ENCODE measurements at regions of chr2 and their contacts with region 1.

Region 1: DNA sequence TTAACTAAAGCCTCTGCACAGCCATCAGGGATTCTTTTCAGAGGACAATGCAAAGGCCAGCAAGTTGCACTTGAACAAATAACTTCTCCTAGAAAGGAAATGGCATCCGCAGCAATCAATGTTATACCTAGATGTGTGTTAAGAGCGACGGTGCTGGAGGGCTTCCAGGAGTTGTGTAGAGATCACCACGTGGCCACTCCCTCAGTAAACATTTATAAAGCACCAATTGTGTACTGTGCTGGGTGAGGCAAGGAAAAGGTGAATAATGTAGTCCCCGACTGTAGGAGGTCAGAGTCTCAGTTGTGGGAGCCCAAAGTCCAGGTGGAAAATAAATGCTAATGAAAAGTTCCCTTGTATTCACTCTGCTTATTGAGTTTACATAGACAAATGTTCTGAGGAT is 135.0 kb downstream of the ALK start:
- DNase-seq: peak; percentile 78
- ATAC-seq: peak; percentile 66
- H3K4me3 ChIP-seq: no peak overlapping the region
- H3K27ac ChIP-seq: peak overlapping the region; percentile 19; the same call in 1 of the 2 replicates
- H3K4me1 ChIP-seq: peaks cover 19% of the 10 kb centered on the region
- H3K27me3 ChIP-seq: no peaks in the 10 kb centered on the region
- CTCF ChIP-seq: no peak

Region 2: DNA sequence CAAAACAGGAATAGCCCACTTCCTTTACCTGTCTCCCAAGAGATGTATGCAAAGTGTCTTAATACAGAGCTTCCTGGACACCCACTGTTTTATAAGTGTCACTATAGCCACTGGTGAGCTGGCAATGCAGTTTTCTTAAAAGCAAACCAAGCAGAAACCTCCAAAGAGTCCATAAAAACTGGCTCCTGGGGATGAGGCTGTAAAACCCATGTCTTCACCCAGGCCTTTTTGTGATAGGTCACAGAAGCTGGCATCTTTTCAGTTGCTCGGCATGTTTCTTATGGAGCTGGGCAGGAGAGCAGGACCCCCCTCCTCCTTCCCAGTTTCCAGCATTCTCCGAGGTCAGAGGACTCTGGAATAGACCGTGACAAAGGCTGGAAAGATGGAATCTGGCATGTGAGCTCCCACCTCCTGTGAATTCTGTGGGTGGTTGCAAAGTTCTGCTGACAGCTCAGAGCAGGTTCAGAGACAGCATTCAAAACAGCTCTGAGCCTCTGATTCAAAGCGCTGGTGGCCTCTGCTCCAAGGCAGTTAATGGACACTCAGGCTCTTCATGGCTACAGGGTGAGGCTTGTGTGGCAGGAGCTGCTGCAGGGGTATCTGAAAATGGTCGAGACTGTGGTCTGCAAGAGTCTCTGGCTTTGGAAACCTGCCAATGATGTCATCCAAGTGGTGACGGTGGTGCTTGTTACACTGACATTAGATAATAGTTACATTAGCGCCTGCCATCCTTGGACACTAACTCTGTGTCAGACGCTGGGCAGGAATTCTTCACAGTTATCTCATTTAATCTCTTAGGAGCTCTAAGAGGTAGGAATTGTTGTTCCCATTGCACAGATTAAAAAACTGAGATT is 387.8 kb before region 1 on chr2:
- CTCF ChIA-PET with region 1: interaction called, 11 read pairs
- POLR2A ChIA-PET with region 1: no interaction called
- intact Hi-C with region 1: no loop called
- DNase-seq: no peak
- ATAC-seq: no peak
- H3K4me3 ChIP-seq: no peak overlapping the region
- H3K27ac ChIP-seq: no peak overlapping the region
- H3K4me1 ChIP-seq: peaks cover 11% of the 10 kb centered on the region
- H3K27me3 ChIP-seq: no peaks in the 10 kb centered on the region
- CTCF ChIP-seq: no peak

Measured in PC-3 (cell line).